ENCODE measurements at regions of chr12 and their contacts with region 1.

Region 1: GRCh38 chr12:122895705-122896636 is at the start of gene VPS37B:
- DNase-seq: peak; percentile 13 to 52
- ATAC-seq: peak; percentile 68 to 81
- H3K4me3 ChIP-seq: peak within 1 kb of the TSS; percentile 82 to 96 (median 94)
- H3K27ac ChIP-seq: peak within 1 kb of the TSS; percentile 79 to 85 (median 84)
- H3K4me1 ChIP-seq: peaks cover 39 to 46% of the 10 kb centered on the region in 2 donors
- H3K27me3 ChIP-seq: no peaks in the 10 kb centered on the region
- CTCF ChIP-seq: peak in 2 of 5 experiments; percentile 11 to 40
- POLR2A ChIP-seq: peak; percentile 80 to 82
- total RNA-seq, gene VPS37B: 4.8 to 8.2 (median 7.6) TPM

Region 2: DNA sequence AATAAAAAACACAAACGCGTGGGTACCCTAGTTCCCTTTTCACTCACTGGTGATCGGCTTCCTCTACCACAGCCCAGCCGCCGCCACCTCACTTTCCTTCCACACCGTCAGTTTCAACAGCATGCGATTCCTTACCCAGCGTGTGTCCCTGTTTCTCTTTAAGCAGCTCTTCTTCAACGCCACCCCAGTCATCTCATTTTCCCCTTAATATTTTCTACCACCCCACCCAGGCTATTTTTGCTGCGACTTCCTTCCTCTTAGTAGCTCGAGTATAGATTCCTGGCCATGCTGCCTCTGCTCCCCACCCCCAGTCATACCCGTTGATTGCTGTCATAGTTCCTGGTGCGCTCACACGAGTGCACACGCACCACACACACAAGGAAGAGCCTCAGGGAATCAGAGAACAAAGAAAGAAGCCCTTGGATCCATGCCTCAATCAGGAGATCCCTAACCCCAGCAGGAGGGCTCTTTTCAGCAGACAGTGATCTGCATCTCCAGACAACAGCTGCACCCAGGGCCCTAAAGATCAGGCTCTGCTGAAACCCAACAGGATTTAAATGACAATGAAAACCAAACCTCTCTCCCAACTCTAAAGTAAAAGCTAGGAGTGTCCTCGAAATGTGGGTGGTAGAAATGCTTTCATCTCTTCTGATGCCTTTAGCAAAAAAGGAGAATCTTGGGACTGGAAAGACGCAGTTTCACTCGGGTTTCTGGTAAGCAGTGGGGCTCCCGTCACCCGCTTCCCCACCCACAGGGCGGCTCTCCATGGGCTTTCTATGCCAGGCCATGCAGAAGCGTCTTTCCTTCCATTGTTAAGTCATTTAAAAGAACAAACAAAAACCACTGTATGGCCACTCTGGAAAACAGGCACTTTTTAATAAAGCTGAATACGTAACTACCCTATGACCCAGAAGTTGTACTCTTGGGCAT is 23.9 kb before region 1 on chr12:
- in situ Hi-C with region 1: no loop called
- intact Hi-C with region 1: loop called (anchors 2 kb)
- DNase-seq: peak in 1 of 2 donors; percentile 39
- ATAC-seq: peak; percentile 41 to 52
- H3K4me3 ChIP-seq: peak overlapping the region; percentile 6 to 53 (median 44)
- H3K27ac ChIP-seq: peak overlapping the region; percentile 61 to 87 (median 79)
- H3K4me1 ChIP-seq: peaks cover 49 to 92% of the 10 kb centered on the region in 2 donors
- H3K27me3 ChIP-seq: no peaks in the 10 kb centered on the region
- CTCF ChIP-seq: no peak
- POLR2A ChIP-seq: peak; percentile 20 to 25

Region 3: DNA sequence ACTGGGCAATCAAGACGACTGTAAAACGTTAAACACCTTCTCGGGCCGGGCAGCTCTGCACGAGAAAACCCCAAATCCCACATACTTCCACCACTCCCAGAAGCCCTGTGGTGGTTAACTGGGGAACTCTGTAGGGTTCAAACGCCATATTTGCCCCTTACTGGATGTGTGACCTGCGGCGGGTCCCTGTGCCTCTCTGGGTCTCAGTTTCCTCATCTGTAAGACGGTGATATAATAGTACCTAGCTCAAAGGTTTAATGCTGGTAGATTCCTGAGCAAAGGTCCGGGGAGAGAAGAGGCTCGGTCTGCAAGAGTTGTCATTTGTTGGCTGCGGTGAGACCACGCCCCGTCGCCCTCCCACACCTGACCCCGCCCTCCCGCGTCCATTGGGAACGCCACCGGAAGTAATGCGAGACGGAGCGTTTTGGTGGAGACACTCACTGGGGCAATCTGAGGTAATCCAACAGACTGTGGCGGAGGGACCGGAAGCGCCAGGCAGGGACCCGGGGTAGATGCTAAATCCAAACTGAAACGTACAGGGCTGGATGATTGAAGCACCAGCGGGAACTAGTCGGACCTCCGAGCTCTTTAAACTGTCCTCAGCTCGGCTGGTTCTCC is 78.4 kb after region 1 on chr12:
- in situ Hi-C with region 1: no loop called
- intact Hi-C with region 1: loop called (anchors 2 kb)
- DNase-seq: peak; percentile 97
- ATAC-seq: peak; percentile 97 to 98
- H3K4me3 ChIP-seq: peak overlapping the region; percentile 85 to 100 (median 91)
- H3K27ac ChIP-seq: peak overlapping the region; percentile 96 to 100 (median 98)
- H3K4me1 ChIP-seq: peaks cover 24 to 37% of the 10 kb centered on the region in 2 donors
- H3K27me3 ChIP-seq: no peaks in the 10 kb centered on the region
- CTCF ChIP-seq: peak in 1 of 5 experiments; percentile 12
- POLR2A ChIP-seq: no peak

Measured in gastrocnemius medialis (tissue), 4 donors.